Activated naive CD8-positive, alpha-beta T cell treated with anti-CD3 and anti-CD28 coated beads, Interleukin-2, amount 10 ng/mL, durations not matched to agents 7 days and 5 days (primary cell): ENCODE measurements at regions of chr14 and their contacts with region 1.

Region 1: GRCh38 chr14:60248697-60249318 is at the start of gene PPM1A:
- DNase-seq: peak; percentile 93
- ATAC-seq: peak; percentile 76
- H3K4me3 Mint-ChIP-seq: peak within 1 kb of the TSS; percentile 90
- H3K27ac Mint-ChIP-seq: peak within 1 kb of the TSS; percentile 99
- H3K4me1 Mint-ChIP-seq: peaks cover 38% of the 10 kb centered on the region
- H3K27me3 Mint-ChIP-seq: no peaks in the 10 kb centered on the region
- total RNA-seq, gene PPM1A: 45.8 to 54.4 TPM

Region 2: GRCh38 chr14:60220084-60220483 is 28.7 kb before region 1 on chr14:
- POLR2A ChIA-PET with region 1: no interaction called
- DNase-seq: no peak
- ATAC-seq: no peak
- H3K4me3 Mint-ChIP-seq: no peak overlapping the region
- H3K27ac Mint-ChIP-seq: no peak overlapping the region
- H3K4me1 Mint-ChIP-seq: peaks cover 2% of the 10 kb centered on the region
- H3K27me3 Mint-ChIP-seq: no peaks in the 10 kb centered on the region

Region 3: DNA sequence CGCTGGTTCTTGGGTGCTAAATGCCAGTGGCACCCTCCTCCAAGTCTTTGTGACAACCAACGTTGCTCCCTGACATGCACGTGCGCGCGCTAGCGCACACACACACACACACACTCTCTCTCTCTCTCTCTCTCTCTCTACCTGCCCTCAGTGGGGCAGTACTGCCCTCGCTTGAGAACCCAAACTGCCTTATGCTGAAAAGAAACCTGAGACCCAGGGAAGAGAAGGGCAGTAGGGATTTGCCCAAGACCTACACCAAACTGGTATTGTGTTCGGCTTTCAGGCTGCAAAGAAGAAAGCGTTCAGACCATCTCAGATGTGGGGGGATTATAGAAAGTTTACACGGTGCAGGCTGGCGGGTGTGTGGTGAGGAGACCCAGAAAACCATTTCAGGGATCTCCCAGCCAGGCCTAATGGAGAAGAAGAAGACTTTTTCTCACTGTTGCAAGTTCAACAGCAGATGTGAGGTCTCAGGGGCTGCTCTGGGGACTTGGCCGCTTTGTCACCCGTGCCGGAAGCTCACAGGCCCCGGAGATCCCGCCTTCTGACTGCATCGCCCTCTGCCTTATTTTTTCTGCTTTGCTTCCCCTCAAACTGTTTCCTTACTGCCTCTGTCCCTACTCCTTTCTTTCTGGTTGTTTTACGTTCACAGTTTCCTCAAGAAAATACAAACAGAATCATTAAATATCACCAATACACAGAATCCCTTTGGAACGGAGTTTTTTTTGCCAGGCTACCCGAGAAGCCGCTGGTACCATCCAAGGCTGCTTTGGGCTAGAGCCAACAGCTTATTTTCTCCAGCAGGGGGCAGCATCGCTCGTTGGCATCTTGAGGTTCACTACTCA is 82.6 kb after region 1 on chr14:
- POLR2A ChIA-PET with region 1: interaction called, 34 read pairs
- DNase-seq: peak; percentile 74
- ATAC-seq: peak; percentile 85
- H3K4me3 Mint-ChIP-seq: peak overlapping the region; percentile 94
- H3K27ac Mint-ChIP-seq: peak overlapping the region; percentile 98
- H3K4me1 Mint-ChIP-seq: peaks cover 30% of the 10 kb centered on the region
- H3K27me3 Mint-ChIP-seq: peaks cover 28% of the 10 kb centered on the region